ENCODE measurements at regions of chr1 and their contacts with region 1.

Region 1: GRCh38 chr1:29245876-29246275 is 9.6 kb downstream of the PTPRU start:
- DNase-seq: peak in 41 of 42 donors; percentile 29 to 82 (median 64)

Region 2: DNA sequence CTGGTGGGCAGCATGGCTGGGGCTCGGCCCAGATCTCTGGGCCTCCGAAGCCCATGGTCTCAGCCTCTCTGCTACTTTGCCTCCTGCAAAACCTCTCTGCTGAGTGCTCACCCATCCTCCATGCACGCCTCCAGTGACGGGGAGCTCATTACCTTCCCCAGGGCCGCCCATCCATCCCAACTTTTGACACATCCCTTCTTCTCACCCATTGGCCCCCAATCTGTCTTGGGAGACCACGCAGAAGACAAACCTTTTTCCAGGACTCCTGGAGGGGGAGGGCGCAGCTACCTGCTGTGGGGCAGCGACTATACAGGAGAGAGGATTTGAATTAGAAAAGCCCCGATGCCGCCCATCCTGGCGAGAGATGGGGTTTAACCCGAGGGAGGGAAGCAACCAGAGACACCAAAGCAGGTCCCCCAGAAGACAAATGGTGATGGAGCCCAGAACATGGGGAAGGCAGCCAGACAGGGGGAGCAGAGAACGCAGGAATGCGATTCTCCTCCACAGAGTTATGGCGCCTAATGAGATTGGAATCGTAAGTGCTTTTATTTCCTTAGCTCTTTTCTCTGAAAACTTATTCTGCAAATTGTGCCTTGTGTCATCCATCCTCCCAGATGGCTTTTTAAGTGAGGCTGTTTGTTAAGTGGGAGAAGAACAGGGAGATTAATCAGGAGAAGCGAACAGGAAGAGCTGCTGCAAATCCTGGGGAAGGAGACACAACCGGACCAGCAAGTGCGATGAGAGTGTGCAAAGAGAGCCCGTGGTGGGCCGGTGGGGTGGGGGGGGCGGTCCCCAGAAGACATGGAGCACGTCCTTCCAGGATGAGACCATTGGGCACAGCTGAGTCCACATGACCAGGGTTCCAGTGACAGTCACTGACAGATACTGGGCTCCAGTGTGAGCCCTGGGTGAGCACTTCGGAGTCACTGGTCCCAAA is 854.0 kb after region 1 on chr1:
- intact Hi-C with region 1: loop called (anchors 10 kb)
- DNase-seq: no peak